Head of caudate nucleus (tissue), 42 donors: ENCODE measurements at regions of chr15 and their contacts with region 1.

Region 1: DNA sequence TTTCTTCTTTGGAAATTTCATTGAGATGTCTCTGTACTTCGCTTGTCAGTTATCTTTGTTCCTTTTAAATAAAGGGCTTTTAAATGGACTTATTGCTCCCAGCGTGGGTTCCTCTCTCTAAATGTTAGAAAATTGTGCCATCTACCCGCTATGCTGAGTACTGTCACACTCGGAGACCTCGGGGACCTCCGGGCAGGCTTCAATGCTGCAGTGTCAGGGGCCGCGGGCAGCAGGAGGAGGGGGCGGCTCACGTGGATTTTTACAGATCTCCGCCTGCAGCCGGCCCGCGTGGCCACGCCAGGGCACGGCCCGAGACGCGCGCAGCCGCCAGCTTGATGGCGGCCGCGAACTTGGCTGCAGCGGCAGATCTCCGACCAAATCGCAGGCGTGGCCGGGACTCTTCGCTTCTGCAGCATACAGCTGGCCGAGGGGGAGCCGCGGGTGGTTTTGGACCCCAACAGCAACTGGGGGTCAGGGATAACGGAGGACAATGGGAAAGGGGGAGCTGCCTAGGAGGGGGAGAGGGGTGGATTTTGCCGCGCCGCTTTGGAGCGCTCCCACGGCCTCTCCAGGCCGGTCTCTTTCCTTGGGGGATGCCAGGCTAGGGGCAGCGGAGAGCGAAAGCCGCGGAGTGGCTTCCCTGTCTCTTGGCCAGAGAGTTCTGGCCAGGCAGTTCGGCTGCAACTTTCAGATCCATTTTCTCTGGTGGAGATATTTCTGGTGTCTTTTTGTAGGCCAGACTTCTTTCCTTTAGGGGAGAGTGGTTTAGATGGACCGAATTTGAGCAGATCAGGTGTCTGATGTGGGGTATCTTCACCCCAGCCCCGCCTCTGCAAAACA is 15.3 kb downstream of the NR2F2 start:
- DNase-seq: peak in 40 of 42 donors; percentile 40 to 81 (median 62)

Region 2: DNA sequence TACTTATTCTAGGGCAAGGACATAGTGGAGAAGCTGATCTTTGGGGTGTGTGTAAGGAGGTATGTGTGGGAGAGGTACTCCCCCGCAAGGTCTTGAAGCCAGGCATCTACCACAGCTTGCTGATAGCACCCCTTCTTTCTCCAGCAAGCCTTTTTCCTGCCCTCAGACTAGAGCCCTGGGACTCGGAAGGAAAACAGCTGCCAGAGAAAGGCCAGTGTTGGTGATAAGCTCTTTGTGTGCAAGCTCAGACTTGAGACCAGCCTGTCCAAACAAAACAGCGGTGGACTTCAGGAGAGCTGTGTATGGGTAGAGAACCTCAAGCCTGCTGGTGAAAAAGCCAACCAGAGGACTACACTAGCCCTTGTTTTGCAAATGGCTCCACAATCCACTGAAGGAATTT is 1085.8 kb before region 1 on chr15:
- intact Hi-C with region 1: loop called (anchors 10 kb)
- DNase-seq: no peak

Region 3: DNA sequence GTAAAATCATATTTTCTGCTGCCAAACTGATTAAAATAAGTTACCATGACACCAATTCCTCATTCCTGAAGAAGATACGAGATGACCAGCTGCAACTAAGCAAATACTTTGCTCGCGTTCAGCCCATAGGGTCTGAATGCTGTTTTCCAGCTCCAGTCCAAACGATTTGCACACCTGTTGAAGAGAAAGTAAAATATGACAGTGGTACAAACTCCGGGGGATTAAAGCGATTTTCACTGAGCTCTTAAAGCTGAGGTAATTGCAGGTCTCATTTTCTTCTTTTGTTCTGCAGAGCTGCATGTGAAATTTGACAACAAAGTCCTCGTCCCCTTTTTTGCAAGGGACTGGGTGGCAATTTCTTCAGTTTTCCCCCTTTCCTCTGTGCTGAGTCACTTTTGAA is 103.1 kb after region 1 on chr15:
- intact Hi-C with region 1: no loop called
- DNase-seq: no peak